HepG2 (cell line): ENCODE measurements at regions of chr5 and their contacts with region 1.

Region 1: GRCh38 chr5:172777881-172778814 is 7.2 kb upstream of the DUSP1 start:
- DNase-seq: peak; percentile 93
- ATAC-seq: peak; percentile 65
- H3K4me3 ChIP-seq: peak overlapping the region; percentile 6 to 51 (median 31); a peak in 4 of 6 replicates
- H3K27ac ChIP-seq: peak overlapping the region; percentile 88
- H3K4me1 ChIP-seq: peaks cover 100% of the 10 kb centered on the region
- H3K27me3 ChIP-seq: no peaks in the 10 kb centered on the region
- CTCF ChIP-seq: no peak
- EP300 ChIP-seq: peak; percentile 73 to 88; a peak in 3 of 4 replicates
- POLR2A ChIP-seq: peak in 1 of 2 experiments; percentile 67; a peak in 2 of 4 replicates
- RAD21 ChIP-seq: no peak

Region 2: GRCh38 chr5:172714491-172715421 is 63.4 kb before region 1 on chr5:
- CTCF ChIA-PET with region 1: no interaction called
- POLR2A ChIA-PET with region 1: interaction called, 71 read pairs
- in situ Hi-C with region 1: no loop called
- intact Hi-C with region 1: loop called (anchors 2 kb)
- DNase-seq: peak; percentile 91
- ATAC-seq: peak; percentile 83
- H3K4me3 ChIP-seq: peak overlapping the region in 2 of 3 experiments; percentile 15 to 49; a peak in 4 of 6 replicates
- H3K27ac ChIP-seq: peak overlapping the region; percentile 66
- H3K4me1 ChIP-seq: peaks cover 51% of the 10 kb centered on the region
- H3K27me3 ChIP-seq: no peaks in the 10 kb centered on the region
- CTCF ChIP-seq: peak; percentile 84
- EP300 ChIP-seq: peak in 1 of 2 experiments; percentile 69; a peak in 1 of 4 replicates
- POLR2A ChIP-seq: peak in 1 of 2 experiments; percentile 67; a peak in 2 of 4 replicates
- RAD21 ChIP-seq: peak; percentile 61

Region 3: DNA sequence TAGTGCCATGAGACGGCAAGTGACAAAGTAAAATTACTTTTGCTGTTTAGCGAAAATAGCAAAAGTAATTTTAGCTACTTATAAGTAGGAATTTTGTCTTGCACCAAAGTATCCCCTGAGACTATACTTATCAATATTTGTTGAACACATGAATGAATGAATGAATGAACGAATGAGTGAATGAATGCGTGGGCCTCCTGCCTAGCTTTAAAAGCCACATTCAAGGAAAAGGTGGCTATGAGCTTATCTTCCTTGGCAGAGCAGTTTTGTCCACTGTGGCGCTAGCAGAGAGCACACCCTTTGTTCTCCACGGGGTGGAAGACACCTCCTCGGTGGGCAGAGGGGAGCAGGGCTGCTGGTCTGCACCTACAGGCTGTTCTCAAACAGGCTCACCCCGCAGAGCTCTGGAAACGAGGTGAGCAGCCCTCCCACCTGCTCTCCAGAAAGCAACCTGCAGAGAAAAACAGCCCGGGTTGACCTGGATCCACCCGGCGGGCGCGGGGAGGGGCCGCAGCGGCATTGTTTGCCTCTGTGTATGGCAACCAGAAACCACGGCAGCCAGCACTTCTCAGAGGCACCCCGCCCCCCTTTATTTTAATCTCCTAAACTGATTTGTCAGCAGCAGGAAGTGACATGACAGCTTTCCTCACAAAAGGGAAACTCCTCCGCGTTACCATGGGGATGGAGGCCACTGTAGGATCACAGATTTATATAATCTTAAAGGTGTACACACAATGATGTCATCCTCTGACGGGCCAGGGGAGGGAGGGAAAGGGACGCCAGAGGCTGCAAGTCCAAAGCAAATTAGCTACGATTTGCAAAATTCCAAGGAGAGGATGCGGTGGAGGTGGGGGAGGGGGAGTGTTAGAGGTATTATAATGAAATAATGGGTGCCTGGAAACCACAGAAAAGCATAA is 13.0 kb before region 1 on chr5:
- CTCF ChIA-PET with region 1: no interaction called
- POLR2A ChIA-PET with region 1: interaction called, 33 read pairs
- in situ Hi-C with region 1: no loop called
- intact Hi-C with region 1: no loop called
- DNase-seq: peak; percentile 99
- ATAC-seq: peak; percentile 78
- H3K4me3 ChIP-seq: peak overlapping the region; percentile 54 to 73 (median 54); a peak in 5 of 6 replicates
- H3K27ac ChIP-seq: peak overlapping the region; percentile 84
- H3K4me1 ChIP-seq: peaks cover 55% of the 10 kb centered on the region
- H3K27me3 ChIP-seq: no peaks in the 10 kb centered on the region; a peak in 2 of 5 replicates
- CTCF ChIP-seq: peak; percentile 22; the same call in 1 of the 2 replicates
- EP300 ChIP-seq: peak; percentile 61 to 73; a peak in 2 of 4 replicates
- POLR2A ChIP-seq: peak in 1 of 2 experiments; percentile 64; a peak in 1 of 4 replicates
- RAD21 ChIP-seq: peak; percentile 45

Region 4: DNA sequence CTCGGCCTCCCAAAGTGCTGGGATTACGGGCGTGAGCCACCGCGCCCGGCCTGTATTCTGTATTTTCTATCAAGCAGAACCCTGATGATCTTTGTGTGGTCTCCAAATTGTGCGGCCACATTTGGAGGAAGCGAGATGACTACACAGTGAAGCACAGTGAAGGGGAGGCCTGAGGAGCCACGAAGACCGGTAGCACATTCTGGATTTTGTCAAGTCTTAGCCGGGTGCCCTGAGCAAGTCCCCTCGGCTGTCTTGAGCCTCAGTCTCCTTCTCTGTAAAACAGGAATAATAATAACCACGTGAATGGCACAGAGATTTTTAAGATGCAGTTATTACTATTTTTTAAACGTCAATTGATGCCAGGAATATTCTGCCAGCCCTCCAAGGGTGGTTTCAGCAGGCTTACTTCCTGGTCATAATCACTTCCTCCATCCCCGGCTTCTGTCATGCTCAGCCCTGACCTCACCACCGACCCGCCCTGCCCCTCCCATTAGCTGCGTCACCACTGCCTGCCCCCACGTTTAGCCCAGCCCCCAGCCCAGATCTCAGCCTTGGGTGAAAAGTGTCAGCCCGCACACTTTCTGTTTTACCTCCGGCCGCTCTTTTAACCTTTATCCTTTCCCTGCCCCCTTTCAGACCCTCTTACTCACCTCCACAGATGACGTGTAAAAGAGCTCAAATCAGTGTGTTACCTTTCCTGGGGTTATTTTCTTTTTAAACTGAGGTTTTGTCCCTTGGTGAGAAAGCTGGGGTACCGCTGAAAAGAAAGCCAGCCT is 28.9 kb after region 1 on chr5:
- CTCF ChIA-PET with region 1: no interaction called
- POLR2A ChIA-PET with region 1: interaction called, 48 read pairs
- in situ Hi-C with region 1: no loop called
- intact Hi-C with region 1: no loop called
- DNase-seq: peak; percentile 80
- ATAC-seq: peak; percentile 95
- H3K4me3 ChIP-seq: peak overlapping the region; percentile 47 to 56 (median 50)
- H3K27ac ChIP-seq: peak overlapping the region; percentile 67
- H3K4me1 ChIP-seq: peaks cover 43% of the 10 kb centered on the region
- H3K27me3 ChIP-seq: no peaks in the 10 kb centered on the region
- CTCF ChIP-seq: no peak
- EP300 ChIP-seq: peak in 1 of 2 experiments; percentile 44; a peak in 1 of 4 replicates
- POLR2A ChIP-seq: peak; percentile 20 to 54; a peak in 2 of 4 replicates
- RAD21 ChIP-seq: no peak

Region 5: DNA sequence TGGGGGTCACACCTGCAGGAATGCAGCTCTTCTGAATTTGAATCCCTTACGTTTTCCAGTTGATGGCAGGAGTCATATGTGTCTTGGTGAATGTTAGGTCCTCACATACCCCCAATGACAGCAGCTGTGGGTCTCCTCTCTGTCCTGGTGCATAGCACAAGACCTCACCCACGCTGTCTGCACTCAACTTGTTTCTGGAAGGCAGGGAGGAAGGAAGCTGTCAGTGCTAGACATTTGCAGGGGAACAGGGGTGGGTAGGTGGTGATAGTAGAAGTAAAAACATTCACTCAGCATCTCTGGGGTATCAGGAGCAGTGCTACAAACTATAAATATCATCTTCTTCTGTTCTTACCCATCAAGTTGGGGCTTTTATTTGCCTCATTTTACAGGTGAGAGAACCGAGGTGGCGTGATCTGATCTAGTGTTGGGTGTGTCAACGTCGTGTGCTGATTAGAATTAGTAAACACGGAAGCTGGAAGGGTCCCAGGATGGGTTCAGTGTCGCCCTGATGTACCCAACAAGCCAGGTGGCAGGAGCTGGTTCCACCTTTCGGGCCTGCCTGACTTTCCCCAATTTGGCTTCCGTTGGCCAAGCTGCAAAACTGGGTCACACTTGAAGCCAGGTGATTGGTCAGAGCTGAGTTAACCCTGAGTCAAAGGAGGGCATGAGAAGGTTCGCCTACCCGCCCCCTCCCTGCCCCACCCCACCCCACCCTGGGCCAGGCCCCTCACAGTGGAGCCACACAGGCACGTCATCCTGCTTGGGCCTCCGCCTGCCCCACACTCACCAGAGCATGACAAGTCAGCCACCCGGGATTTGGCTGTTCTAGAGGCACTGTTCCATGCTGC is 71.7 kb after region 1 on chr5:
- CTCF ChIA-PET with region 1: no interaction called
- POLR2A ChIA-PET with region 1: interaction called, 28 read pairs
- in situ Hi-C with region 1: loop called (anchors 10 kb)
- intact Hi-C with region 1: no loop called
- DNase-seq: no peak
- ATAC-seq: no peak
- H3K4me3 ChIP-seq: no peak overlapping the region
- H3K27ac ChIP-seq: no peak overlapping the region
- H3K4me1 ChIP-seq: peaks cover 92% of the 10 kb centered on the region
- H3K27me3 ChIP-seq: no peaks in the 10 kb centered on the region
- CTCF ChIP-seq: no peak
- EP300 ChIP-seq: no peak
- POLR2A ChIP-seq: no peak
- RAD21 ChIP-seq: no peak

Region 6: DNA sequence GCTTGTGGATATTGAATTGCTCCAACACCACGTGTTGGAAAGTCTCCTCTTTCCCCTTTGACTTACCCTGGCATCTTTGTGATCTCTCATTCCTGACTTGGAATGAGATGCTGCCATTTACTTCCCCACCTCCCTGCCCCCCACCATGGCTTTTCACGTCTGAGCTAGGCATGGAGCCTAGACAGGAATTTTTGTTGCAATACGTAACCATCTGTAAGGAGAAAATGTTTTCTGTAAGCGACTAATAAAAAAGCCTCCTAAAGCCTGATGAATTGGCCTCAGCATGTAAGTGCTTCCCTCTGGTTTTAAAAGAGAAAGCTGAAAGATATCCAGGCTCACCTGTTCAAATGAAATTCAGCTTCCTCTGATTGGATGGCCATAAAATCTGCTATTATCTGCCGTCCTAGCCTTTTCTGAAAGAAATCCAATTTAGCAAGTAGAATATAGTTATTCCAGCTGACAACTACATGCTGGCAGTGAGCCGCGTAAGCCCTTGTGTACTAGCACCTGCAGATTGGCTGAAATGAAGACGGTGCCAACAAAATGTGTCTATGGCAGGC is 1467.4 kb after region 1 on chr5:
- CTCF ChIA-PET with region 1: no interaction called
- POLR2A ChIA-PET with region 1: no interaction called
- in situ Hi-C with region 1: no loop called
- intact Hi-C with region 1: no loop called
- DNase-seq: no peak
- ATAC-seq: no peak
- H3K4me3 ChIP-seq: no peak overlapping the region
- H3K27ac ChIP-seq: no peak overlapping the region
- H3K4me1 ChIP-seq: no peaks in the 10 kb centered on the region
- H3K27me3 ChIP-seq: peaks cover 2 to 4% of the 10 kb centered on the region in 2 experiments; a peak in 3 of 5 replicates
- CTCF ChIP-seq: no peak
- EP300 ChIP-seq: no peak
- POLR2A ChIP-seq: no peak
- RAD21 ChIP-seq: no peak